ENCODE measurements at regions of chr17 and their contacts with region 1.

Region 1: DNA sequence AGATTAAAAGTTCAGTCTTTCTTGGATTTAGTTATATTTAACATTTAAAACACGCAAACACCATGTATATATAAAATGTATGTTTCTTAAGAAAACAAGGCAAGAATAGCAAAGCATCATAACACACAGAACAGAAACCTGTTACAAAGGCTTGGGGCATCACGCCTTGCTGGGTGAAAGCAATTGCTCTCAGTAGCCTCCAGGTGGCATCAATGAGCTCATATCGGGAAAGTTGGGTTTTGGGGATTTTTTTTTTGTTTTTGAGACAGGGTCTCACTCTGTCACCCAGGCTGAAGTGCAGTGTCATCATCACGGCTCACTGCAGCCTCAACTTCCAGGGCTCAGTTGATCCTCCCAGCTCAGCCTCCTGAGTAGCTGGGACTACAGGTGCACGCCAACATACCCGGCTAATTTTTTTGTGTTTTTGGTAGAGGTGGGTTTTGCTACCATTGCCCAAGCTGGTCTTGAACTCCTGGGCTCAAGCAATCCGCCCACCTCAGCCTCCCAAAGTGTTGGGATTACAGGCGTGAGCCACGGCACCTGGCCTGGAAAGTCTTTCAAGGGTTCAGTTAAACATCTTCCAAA is 56.9 kb downstream of the CYB5D2 start:
- DNase-seq: no peak
- H3K4me3 ChIP-seq: no peak overlapping the region
- H3K27ac ChIP-seq: peak overlapping the region in 2 of 4 donors; percentile 8 to 39
- H3K4me1 ChIP-seq: peaks cover 0 to 24% (median 16%) of the 10 kb centered on the region in 4 donors
- H3K27me3 ChIP-seq: no peaks in the 10 kb centered on the region
- CTCF ChIP-seq: peak; percentile 49 to 71 (median 58)
- EP300 ChIP-seq: no peak
- POLR2A ChIP-seq: no peak

Region 2: GRCh38 chr17:4143563-4144421 is 56.1 kb before region 1 on chr17:
- intact Hi-C with region 1: loop called (anchors 5 kb)
- DNase-seq: peak; percentile 96
- H3K4me3 ChIP-seq: peak overlapping the region; percentile 76 to 99 (median 94)
- H3K27ac ChIP-seq: peak overlapping the region; percentile 97 to 100 (median 99)
- H3K4me1 ChIP-seq: peaks cover 0 to 47% (median 44%) of the 10 kb centered on the region in 4 donors
- H3K27me3 ChIP-seq: no peaks in the 10 kb centered on the region
- CTCF ChIP-seq: no peak
- EP300 ChIP-seq: no peak
- POLR2A ChIP-seq: peak; percentile 83 to 85

Region 3: GRCh38 chr17:4236456-4236855 is 36.5 kb after region 1 on chr17:
- intact Hi-C with region 1: no loop called
- DNase-seq: no peak
- H3K4me3 ChIP-seq: no peak overlapping the region
- H3K27ac ChIP-seq: peak overlapping the region; percentile 19 to 94 (median 83)
- H3K4me1 ChIP-seq: peaks cover 0 to 57% (median 54%) of the 10 kb centered on the region in 4 donors
- H3K27me3 ChIP-seq: no peaks in the 10 kb centered on the region
- CTCF ChIP-seq: no peak
- EP300 ChIP-seq: no peak
- POLR2A ChIP-seq: no peak

Measured in sigmoid colon (tissue), 7 donors.